Mucosa of descending colon (tissue), 3 donors: ENCODE measurements at regions of chr6 and their contacts with region 1.

Region 1: GRCh38 chr6:161694995-161695394 is 421.1 kb upstream of the AGPAT4 start:
- DNase-seq: peak in 1 of 3 donors; percentile 7
- ATAC-seq: peak; percentile 22
- H3K4me3 ChIP-seq: no peak overlapping the region
- H3K4me1 ChIP-seq: no peaks in the 10 kb centered on the region
- CTCF ChIP-seq: no peak

Region 2: GRCh38 chr6:161418463-161418945 is 276.5 kb before region 1 on chr6:
- intact Hi-C with region 1: loop called in 1 of 2 experiments (anchors 10 kb)
- DNase-seq: peak in 1 of 3 donors; percentile 79
- ATAC-seq: peak; percentile 52
- H3K4me3 ChIP-seq: no peak overlapping the region
- H3K4me1 ChIP-seq: no peaks in the 10 kb centered on the region
- CTCF ChIP-seq: no peak